MCF 10A (cell line): ENCODE measurements at regions of chr12 and their contacts with region 1.

Region 1: DNA sequence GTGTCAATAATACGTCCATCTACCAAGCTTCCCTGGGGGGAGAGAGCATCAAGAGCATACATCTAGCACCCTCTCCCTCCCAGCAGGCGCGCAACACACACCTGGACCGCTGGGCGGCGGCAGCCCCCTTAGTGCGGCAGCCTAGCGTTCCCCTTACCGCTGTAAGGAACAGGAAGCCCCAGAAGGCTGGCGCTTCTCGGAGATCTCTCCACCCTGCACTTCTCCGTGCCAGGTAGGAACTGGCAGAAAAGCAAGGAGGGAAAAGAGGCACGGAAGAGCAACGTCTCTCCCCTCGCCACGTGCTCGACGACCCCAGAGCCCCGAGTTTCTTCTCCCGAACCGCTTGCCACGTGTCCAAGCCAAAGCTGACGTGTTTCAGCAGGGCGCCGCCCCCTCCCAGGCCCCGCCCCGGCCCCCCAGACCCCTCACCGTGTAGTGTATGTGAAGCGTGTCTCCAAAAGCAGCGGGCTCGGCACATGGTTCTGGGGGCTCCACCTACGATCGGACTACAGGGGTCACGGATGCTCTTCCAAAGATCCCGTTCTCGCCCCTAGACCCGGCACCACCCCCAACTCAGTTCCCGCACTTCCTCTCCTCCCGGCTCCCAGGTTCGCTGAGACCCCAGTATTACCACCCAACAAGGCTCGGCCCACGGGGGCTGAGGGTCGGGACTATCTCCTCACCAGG is 532 bp downstream of the FKBP11 start:
- DNase-seq: no peak
- H3K4me3 Mint-ChIP-seq: no peak overlapping the region
- H3K27ac Mint-ChIP-seq: no peak overlapping the region
- H3K4me1 Mint-ChIP-seq: no peaks in the 10 kb centered on the region
- H3K27me3 Mint-ChIP-seq: no peaks in the 10 kb centered on the region
- CTCF ChIP-seq: no peak

Region 2: GRCh38 chr12:48442191-48442828 is 482.4 kb before region 1 on chr12:
- CTCF ChIA-PET with region 1: no interaction called
- POLR2A ChIA-PET with region 1: no interaction called
- intact Hi-C with region 1: no loop called
- DNase-seq: no peak
- H3K4me3 Mint-ChIP-seq: no peak overlapping the region
- H3K27ac Mint-ChIP-seq: no peak overlapping the region
- H3K4me1 Mint-ChIP-seq: no peaks in the 10 kb centered on the region
- H3K27me3 Mint-ChIP-seq: peaks cover 36% of the 10 kb centered on the region
- CTCF ChIP-seq: no peak

Region 3: GRCh38 chr12:48936379-48936979 is 11.7 kb after region 1 on chr12:
- CTCF ChIA-PET with region 1: interaction called, 18 read pairs
- POLR2A ChIA-PET with region 1: no interaction called
- intact Hi-C with region 1: no loop called
- DNase-seq: peak; percentile 62
- H3K4me3 Mint-ChIP-seq: no peak overlapping the region
- H3K27ac Mint-ChIP-seq: no peak overlapping the region
- H3K4me1 Mint-ChIP-seq: no peaks in the 10 kb centered on the region
- H3K27me3 Mint-ChIP-seq: no peaks in the 10 kb centered on the region
- CTCF ChIP-seq: peak; percentile 77

Region 4: GRCh38 chr12:49651855-49652254 is 727.1 kb after region 1 on chr12:
- CTCF ChIA-PET with region 1: no interaction called
- POLR2A ChIA-PET with region 1: no interaction called
- intact Hi-C with region 1: no loop called
- DNase-seq: no peak
- H3K4me3 Mint-ChIP-seq: no peak overlapping the region
- H3K27ac Mint-ChIP-seq: no peak overlapping the region
- H3K4me1 Mint-ChIP-seq: no peaks in the 10 kb centered on the region
- H3K27me3 Mint-ChIP-seq: no peaks in the 10 kb centered on the region
- CTCF ChIP-seq: no peak